SK-N-SH (cell line): ENCODE measurements at regions of chr20 and their contacts with region 1.

Region 1: DNA sequence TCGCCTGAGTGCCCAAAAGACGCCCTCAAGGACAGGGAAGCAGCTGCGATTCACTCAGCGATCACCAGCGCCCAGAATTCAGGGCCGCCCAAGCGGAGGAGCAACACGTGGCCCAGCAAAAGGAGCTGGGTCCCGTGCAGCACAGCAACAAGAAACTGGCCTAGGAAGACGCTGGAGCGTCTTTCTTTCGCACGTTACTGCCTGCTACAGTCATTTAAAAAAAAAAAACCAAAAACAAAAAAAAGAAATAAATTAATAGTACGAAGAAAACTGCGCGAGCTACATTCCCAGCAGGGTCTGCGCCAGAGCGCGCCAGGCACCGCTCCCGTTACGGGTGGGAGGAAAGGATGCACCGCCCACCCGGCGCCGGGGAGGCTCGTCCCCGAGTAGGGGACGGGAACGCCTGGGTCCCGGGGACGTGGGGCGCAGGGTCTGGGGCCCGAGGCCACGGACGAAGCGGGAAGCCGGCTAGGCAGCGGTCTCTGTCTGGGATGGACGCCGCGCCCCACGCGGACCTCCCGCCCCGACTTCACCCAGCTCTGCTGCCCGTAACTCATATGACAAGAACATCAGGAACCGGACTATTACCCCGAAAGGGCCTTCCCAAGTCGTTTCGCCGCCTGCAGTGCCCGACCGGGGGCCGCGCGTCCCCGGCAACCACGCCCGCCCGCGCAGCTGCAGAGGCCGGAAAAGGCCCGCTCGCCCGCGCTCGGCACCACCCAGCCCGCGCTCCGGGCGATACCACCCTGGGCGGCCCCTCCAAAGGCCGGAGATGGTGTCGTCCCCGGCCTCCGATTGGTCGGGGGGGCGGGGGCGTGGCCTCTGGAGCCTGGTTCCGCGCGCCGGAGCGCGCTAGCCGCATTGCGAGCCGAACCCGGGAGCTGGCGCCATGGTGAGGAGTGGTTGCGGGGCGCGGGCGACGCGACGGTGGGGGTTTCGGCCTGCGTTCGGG is at the start of gene NOP56:
- DNase-seq: peak; percentile 98
- H3K4me3 ChIP-seq: peak within 1 kb of the TSS; percentile 72 to 94
- H3K27ac ChIP-seq: peak within 1 kb of the TSS; percentile 87 to 95
- H3K4me1 ChIP-seq: peaks cover 6 to 18% of the 10 kb centered on the region in 2 experiments; a peak in 3 of 4 replicates
- H3K27me3 ChIP-seq: no peaks in the 10 kb centered on the region
- CTCF ChIP-seq: no peak
- EP300 ChIP-seq: peak in 1 of 2 experiments; percentile 31; a peak in 1 of 4 replicates
- RAD21 ChIP-seq: no peak
- polyA plus RNA-seq, gene NOP56: 158 and 218 TPM in 2 replicates

Region 2: GRCh38 chr20:2470423-2471193 is 181.4 kb before region 1 on chr20 and contains the start of gene SNRPB:
- CTCF ChIA-PET with region 1: interaction called, 7 read pairs
- POLR2A ChIA-PET with region 1: interaction called, 35 read pairs
- DNase-seq: peak; percentile 92
- H3K4me3 ChIP-seq: peak within 1 kb of the TSS; percentile 86 to 89
- H3K27ac ChIP-seq: peak within 1 kb of the TSS; percentile 86 to 96
- H3K4me1 ChIP-seq: peaks cover 15 to 21% of the 10 kb centered on the region in 2 experiments
- H3K27me3 ChIP-seq: no peaks in the 10 kb centered on the region
- CTCF ChIP-seq: no peak
- EP300 ChIP-seq: peak in 1 of 2 experiments; percentile 51; a peak in 1 of 4 replicates
- RAD21 ChIP-seq: peak; percentile 4; the same call in 1 of the 2 replicates
- polyA plus RNA-seq, gene SNRPB: 380 and 455 TPM in 2 replicates

Region 3: DNA sequence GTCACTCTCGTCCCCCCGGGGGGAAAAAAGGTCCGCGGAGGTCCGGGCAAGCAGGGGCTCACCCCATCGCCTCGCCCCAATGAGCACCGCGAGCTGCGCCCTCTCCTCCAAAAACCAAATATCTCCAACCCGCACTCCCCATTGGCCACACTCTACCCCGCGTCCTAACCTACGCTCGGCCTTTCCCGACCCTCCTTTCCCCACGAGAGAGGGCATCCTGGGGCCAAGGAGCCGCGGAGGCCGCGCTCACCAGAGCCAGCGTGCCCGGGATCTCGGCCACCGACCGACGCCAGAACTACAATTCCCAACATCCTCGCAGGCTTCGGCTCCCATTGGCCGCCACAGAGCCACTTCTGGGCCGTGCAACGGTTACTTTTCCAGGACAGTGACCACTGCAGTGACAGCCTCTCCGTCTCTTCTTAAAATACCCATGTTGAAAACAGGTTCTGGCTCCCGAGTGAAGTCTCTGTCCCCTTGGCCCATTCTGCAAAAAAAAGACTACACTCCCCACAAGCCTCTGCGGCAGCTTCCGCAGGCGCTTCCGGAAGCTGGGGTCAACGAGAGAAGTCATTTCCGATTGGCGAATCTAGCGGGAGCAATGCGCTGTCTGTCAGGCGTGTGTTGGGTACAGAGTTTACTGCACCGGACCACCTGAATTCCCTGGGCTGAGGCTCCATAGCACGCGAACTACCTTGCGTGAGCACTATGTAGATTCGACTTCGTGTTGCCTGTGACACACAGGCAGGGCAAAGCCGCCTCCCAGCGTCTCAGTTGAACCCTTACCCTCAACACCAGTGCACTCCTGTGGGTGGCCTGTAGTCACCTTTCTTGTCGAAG is 143.2 kb before region 1 on chr20 and contains the start of gene ZNF343:
- CTCF ChIA-PET with region 1: interaction called, 6 read pairs
- POLR2A ChIA-PET with region 1: interaction called, 13 read pairs
- DNase-seq: peak; percentile 86
- H3K4me3 ChIP-seq: peak within 1 kb of the TSS; percentile 76 to 84
- H3K27ac ChIP-seq: peak within 1 kb of the TSS; percentile 56 to 95
- H3K4me1 ChIP-seq: peaks cover 2 to 12% of the 10 kb centered on the region in 2 experiments; a peak in 2 of 4 replicates
- H3K27me3 ChIP-seq: no peaks in the 10 kb centered on the region
- CTCF ChIP-seq: no peak
- EP300 ChIP-seq: no peak; a peak in 1 of 4 replicates
- RAD21 ChIP-seq: no peak
- polyA plus RNA-seq, gene ZNF343: 11.0 and 16.8 TPM in 2 replicates

Region 4: DNA sequence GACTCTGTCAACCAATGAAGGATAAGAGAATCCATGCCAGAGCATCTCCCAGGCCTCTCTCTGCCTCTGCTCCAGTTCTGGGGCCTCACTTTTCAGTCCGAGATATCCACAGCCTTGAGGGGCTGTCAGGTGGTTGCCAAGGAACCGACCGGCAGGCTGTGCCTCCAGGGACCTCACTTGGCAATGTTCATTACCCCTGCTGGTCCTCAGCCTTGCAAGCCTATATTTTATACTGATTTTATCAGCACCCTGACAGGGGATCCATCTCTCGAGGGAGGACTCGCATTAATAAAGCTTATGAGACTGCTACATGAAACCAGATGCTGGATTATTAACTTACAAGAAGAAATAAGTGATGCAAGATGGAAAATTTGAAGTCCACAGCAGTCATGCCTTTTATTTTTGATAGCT is 75.7 kb before region 1 on chr20:
- CTCF ChIA-PET with region 1: interaction called, 11 read pairs
- POLR2A ChIA-PET with region 1: interaction called, 3 read pairs
- DNase-seq: peak; percentile 74
- H3K4me3 ChIP-seq: no peak overlapping the region
- H3K27ac ChIP-seq: peak overlapping the region in 1 of 2 experiments; percentile 51; a peak in 2 of 4 replicates
- H3K4me1 ChIP-seq: peaks cover 0 to 14% of the 10 kb centered on the region in 2 experiments; a peak in 2 of 4 replicates
- H3K27me3 ChIP-seq: peaks cover 4% of the 10 kb centered on the region; the same call in 1 of the 2 replicates
- CTCF ChIP-seq: no peak
- EP300 ChIP-seq: peak in 1 of 2 experiments; percentile 80; a peak in 2 of 4 replicates
- RAD21 ChIP-seq: peak; percentile 14; the same call in 1 of the 2 replicates

Region 5: GRCh38 chr20:2610941-2611720 is 40.9 kb before region 1 on chr20:
- CTCF ChIA-PET with region 1: no interaction called
- POLR2A ChIA-PET with region 1: no interaction called
- DNase-seq: no peak
- H3K4me3 ChIP-seq: no peak overlapping the region
- H3K27ac ChIP-seq: no peak overlapping the region
- H3K4me1 ChIP-seq: no peaks in the 10 kb centered on the region
- H3K27me3 ChIP-seq: no peaks in the 10 kb centered on the region; the same call in 1 of the 2 replicates
- CTCF ChIP-seq: no peak
- EP300 ChIP-seq: no peak
- RAD21 ChIP-seq: no peak

Region 6: GRCh38 chr20:2637246-2637645 is 14.8 kb before region 1 on chr20:
- CTCF ChIA-PET with region 1: interaction called, 13 read pairs
- POLR2A ChIA-PET with region 1: no interaction called
- DNase-seq: no peak
- H3K4me3 ChIP-seq: no peak overlapping the region
- H3K27ac ChIP-seq: no peak overlapping the region
- H3K4me1 ChIP-seq: no peaks in the 10 kb centered on the region
- H3K27me3 ChIP-seq: no peaks in the 10 kb centered on the region; the same call in 1 of the 2 replicates
- CTCF ChIP-seq: no peak
- EP300 ChIP-seq: no peak
- RAD21 ChIP-seq: no peak

Region 7: DNA sequence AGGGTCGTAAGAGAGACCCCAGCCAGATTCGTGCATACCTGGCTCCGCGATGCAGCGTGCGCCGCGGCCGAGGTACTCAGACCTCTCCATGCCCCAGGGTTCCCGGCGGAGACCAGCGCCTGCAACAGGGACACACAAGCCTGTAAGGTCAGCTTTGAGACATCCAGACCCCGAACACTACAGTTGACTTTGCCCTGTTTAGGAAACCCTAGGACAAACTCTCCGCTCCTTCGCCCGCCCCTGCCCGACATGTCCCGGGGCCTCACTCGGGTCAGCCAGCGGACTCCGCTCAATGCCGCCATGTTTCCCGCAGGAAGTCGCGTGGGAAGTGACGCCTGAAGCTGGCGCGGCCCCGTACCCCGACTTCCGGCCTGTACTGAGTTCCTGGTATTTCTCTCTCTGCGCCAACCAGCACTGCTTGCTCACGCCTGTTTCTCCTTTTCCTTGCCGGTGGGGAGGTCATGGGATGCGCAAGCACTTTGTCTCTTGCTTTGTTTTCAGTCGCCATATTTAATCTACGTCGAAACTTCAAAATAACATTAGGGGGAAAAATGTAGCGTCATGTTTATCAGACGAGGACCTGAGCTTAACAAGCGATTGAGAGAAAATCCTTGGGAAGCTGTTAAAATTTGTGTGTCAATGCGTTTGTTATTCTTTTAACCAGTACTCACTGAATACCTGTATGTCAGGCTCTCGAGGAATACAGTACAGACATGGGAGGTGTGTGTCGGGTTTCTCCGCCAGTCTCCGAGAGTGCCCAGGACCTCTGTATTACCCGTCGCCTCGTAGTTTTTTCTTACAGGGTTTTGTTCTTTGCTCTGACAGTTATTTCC is 12.1 kb after region 1 on chr20 and contains the start of gene IDH3B:
- CTCF ChIA-PET with region 1: interaction called, 8 read pairs
- POLR2A ChIA-PET with region 1: interaction called, 26 read pairs
- DNase-seq: peak; percentile 90
- H3K4me3 ChIP-seq: peak within 1 kb of the TSS; percentile 76 to 97
- H3K27ac ChIP-seq: peak within 1 kb of the TSS; percentile 93 to 96
- H3K4me1 ChIP-seq: peaks cover 0 to 11% of the 10 kb centered on the region in 2 experiments; a peak in 2 of 4 replicates
- H3K27me3 ChIP-seq: no peaks in the 10 kb centered on the region
- CTCF ChIP-seq: no peak
- EP300 ChIP-seq: no peak; a peak in 1 of 4 replicates
- RAD21 ChIP-seq: no peak
- polyA plus RNA-seq, gene IDH3B: 233 and 268 TPM in 2 replicates

Region 8: DNA sequence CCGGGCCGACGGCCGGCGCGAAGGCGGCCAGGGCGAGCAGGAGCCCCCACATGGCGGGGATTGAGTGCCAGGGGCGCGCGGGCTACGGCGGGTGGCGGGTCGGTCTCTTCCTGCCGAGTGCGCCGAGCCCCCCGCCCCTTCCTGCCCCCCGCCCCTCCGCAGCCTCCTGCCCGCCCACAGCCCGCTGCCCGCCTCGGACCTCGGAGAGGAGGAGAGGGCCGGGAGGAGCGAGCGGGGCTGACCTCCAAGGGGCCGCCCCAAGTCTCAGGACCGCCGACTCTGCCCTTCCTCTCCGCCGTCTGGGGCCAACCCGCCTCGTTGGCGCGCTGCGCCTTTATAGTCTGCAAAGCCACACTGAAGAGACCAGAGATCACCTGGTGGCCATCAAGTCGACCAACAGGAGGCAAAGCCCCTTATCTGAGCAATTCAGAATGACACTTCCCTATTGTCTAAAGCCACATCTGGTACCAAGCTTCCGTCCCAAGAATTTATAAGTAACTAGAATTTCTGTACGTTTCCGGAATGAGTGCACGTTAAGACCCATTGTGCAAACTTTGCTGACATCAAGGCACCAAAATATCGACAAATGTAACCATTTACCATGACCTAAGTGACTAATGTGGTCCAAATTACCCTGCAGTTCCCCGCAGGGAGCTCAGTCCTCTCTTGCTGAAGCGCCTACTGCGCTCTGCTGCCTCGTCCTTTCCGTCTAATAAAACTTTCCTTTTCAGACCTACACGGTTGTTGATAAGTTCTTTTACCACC is 148.7 kb after region 1 on chr20 and contains the start of gene CPXM1:
- CTCF ChIA-PET with region 1: no interaction called
- POLR2A ChIA-PET with region 1: interaction called, 11 read pairs
- DNase-seq: peak; percentile 98
- H3K4me3 ChIP-seq: peak within 1 kb of the TSS; percentile 53 to 60
- H3K27ac ChIP-seq: peak within 1 kb of the TSS in 1 of 2 experiments; percentile 83; a peak in 2 of 4 replicates
- H3K4me1 ChIP-seq: peaks cover 0 to 14% of the 10 kb centered on the region in 2 experiments; a peak in 1 of 4 replicates
- H3K27me3 ChIP-seq: no peaks in the 10 kb centered on the region
- CTCF ChIP-seq: no peak
- EP300 ChIP-seq: no peak
- RAD21 ChIP-seq: no peak
- polyA plus RNA-seq, gene CPXM1: 58.3 and 99.9 TPM in 2 replicates